ENCODE measurements at regions of chr16 and their contacts with region 1.

Region 1: DNA sequence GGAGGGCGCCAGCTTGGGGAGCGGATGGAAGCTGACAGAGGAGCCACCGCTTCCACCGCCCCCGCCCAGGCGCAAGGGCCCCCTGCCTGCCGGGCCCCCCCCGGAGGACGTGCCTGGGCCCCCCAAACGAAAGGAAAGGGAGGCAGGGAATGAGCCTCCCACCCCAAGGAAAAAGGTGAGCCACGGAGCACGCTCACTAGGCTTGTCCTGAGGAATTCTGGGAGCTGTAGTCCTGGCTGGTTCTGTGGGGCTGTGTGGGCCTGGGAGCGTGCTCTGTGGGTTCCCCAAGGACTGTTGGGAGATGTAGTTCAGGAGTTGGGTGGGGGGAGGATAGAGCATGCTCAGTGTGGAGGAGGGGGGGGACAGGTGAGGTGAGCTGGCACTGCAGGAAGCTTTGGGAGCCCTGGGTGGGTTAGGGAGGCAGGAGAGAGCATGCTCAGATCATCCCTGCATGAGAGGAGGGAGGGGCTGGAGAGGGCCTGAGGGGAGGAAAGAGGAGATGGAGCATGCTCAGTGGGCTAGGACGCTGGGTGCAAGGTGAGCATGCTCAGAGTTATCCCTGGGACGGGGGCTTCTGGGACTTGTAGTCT is 4.5 kb downstream of the FBXL19 start:
- DNase-seq: peak; percentile 95
- H3K4me3 ChIP-seq: no peak overlapping the region; a peak in 1 of 4 replicates
- H3K27ac ChIP-seq: peak overlapping the region in 1 of 2 experiments; percentile 58; a peak in 1 of 4 replicates
- H3K4me1 ChIP-seq: peaks cover 0 to 23% of the 10 kb centered on the region in 2 experiments; a peak in 1 of 4 replicates
- H3K27me3 ChIP-seq: no peaks in the 10 kb centered on the region
- CTCF ChIP-seq: no peak
- EP300 ChIP-seq: no peak
- RAD21 ChIP-seq: no peak

Region 2: GRCh38 chr16:30910427-30911029 is 17.4 kb before region 1 on chr16:
- CTCF ChIA-PET with region 1: no interaction called
- POLR2A ChIA-PET with region 1: no interaction called
- DNase-seq: no peak
- H3K4me3 ChIP-seq: no peak overlapping the region
- H3K27ac ChIP-seq: no peak overlapping the region
- H3K4me1 ChIP-seq: no peaks in the 10 kb centered on the region
- H3K27me3 ChIP-seq: no peaks in the 10 kb centered on the region
- CTCF ChIP-seq: no peak
- EP300 ChIP-seq: no peak
- RAD21 ChIP-seq: no peak

Region 3: GRCh38 chr16:30941600-30942425 is 13.9 kb after region 1 on chr16:
- CTCF ChIA-PET with region 1: interaction called, 39 read pairs
- POLR2A ChIA-PET with region 1: interaction called, 4 read pairs
- DNase-seq: peak; percentile 90
- H3K4me3 ChIP-seq: no peak overlapping the region; a peak in 1 of 4 replicates
- H3K27ac ChIP-seq: no peak overlapping the region; a peak in 2 of 4 replicates
- H3K4me1 ChIP-seq: peaks cover 0 to 7% of the 10 kb centered on the region in 2 experiments; a peak in 1 of 4 replicates
- H3K27me3 ChIP-seq: no peaks in the 10 kb centered on the region
- CTCF ChIP-seq: peak; percentile 83
- EP300 ChIP-seq: no peak
- RAD21 ChIP-seq: peak; percentile 70

Region 4: DNA sequence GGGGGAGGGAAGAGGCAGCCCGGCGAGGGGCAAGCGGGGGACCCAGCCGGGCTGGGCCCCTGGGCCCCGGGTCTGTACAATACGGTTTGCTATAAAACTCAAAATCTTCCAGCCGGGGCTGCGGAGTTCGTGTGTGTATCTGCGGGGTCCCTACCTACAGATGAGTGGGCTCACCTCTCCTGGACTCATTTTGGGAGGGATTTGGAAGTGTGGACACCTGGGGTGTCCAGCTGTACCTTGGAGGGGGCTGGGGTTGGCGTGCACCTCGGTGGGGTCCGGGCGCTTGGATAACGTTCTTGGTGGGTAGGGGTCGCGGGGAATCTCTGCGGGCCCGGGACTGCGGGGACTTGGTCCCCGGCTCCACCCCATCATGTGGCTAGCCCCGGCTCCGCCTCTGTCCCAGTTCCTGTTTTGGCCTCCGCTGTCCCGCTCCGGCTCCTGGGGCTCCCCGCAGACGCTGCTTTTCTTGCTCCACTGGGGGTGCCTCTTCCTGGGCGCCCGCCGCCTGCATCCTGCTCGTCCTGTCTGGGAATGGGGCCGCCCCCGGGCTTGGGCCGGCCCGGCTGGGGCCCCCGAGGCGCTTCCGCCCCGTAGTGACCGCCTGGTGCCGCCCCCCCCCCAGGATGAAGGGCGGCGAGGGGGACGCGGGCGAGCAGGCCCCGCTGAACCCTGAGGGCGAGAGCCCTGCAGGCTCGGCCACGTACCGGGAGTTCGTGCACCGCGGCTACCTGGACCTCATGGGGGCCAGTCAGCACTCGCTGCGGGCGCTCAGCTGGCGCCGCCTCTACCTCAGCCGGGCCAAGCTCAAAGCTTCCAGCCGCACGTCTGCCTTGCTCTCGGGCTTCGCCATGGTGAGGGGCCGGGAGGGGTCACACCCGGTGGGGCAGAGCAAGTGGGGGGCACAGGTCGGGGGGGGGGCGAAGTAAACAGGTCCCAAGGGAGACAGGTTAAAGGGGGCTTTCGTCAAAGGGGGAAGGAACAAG is 21.1 kb after region 1 on chr16 and contains the start of gene ORAI3:
- CTCF ChIA-PET with region 1: interaction called, 10 read pairs
- POLR2A ChIA-PET with region 1: interaction called, 3 read pairs
- DNase-seq: peak; percentile 80
- H3K4me3 ChIP-seq: peak within 1 kb of the TSS; percentile 80 to 93
- H3K27ac ChIP-seq: peak within 1 kb of the TSS; percentile 86 to 91
- H3K4me1 ChIP-seq: peaks cover 0 to 29% of the 10 kb centered on the region in 2 experiments; a peak in 1 of 4 replicates
- H3K27me3 ChIP-seq: no peaks in the 10 kb centered on the region
- CTCF ChIP-seq: no peak
- EP300 ChIP-seq: no peak
- RAD21 ChIP-seq: no peak
- polyA plus RNA-seq, gene ORAI3: 29.0 and 31.8 TPM in 2 replicates

Region 5: DNA sequence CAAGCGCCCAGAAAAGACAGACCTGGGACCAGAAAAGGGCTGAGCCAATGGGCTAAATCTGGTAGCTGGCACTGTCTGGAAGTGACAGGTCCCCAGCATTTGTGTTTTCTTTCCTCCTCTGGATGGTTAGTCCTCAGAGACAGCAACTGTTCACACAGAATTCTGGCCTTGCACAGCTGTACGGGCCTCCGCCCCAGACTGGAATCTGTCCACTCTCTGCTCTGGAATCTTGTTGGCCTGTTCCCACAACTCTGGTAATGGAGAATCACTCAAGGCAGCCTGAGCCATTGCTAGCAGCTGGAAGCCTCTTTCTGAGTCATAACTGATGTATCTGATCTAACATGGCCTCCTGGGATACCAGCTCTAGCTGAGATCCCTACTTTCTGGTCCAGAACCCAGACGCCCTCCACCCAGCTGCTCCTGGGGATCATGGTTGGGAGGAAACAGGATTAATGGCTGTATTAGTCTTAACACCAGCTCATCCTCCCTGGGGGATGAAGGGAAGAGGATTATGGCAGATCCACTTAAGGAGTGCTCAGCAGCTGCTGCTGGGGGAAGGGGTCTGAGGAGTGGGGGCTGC is 137.1 kb after region 1 on chr16:
- CTCF ChIA-PET with region 1: no interaction called
- POLR2A ChIA-PET with region 1: no interaction called
- DNase-seq: no peak
- H3K4me3 ChIP-seq: no peak overlapping the region
- H3K27ac ChIP-seq: peak overlapping the region; percentile 18 to 89
- H3K4me1 ChIP-seq: peaks cover 0 to 11% of the 10 kb centered on the region in 2 experiments; a peak in 3 of 4 replicates
- H3K27me3 ChIP-seq: no peaks in the 10 kb centered on the region
- CTCF ChIP-seq: no peak
- EP300 ChIP-seq: no peak
- RAD21 ChIP-seq: no peak